Colonic mucosa (tissue), 4 donors: ENCODE measurements at regions of chr13 and their contacts with region 1.

Region 1: DNA sequence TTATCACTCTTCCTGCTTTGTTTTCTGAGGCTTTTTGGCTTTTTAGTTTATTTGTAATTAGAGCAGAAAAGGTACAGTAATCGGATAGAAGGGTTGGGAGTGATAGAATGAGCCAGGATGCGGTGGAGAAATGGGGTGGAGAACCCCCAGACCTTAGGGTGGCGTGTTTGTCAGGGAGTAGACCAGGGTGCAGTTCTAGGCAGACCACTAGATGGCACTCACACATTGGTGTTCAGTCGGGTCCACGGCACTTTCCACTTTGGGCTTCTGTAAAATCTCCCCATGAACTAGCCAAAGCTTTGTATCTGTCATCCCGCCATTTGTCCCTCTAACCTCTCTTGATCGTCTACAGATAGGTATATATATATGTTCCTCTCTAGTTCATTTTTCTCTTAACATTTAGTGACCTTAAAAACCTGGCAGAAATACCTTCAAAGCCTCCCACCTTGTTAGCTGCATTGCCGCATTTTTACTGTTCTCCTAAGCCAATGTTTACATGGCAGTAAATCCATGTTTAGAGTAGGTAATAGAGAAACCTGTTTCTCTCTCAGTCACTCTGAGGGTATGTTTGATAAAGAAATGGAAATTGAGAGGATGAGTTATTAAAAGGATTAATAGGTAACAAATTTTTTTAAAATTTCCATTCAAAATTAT is 154.9 kb downstream of the TM9SF2 start:
- DNase-seq: peak; percentile 89
- H3K4me3 ChIP-seq: no peak overlapping the region
- H3K27ac ChIP-seq: no peak overlapping the region
- H3K4me1 ChIP-seq: no peaks in the 10 kb centered on the region
- H3K27me3 ChIP-seq: no peaks in the 10 kb centered on the region
- CTCF ChIP-seq: peak; percentile 82

Region 2: GRCh38 chr13:99250982-99251825 is 405.0 kb before region 1 on chr13:
- intact Hi-C with region 1: no loop called
- DNase-seq: no peak
- H3K4me3 ChIP-seq: no peak overlapping the region
- H3K27ac ChIP-seq: no peak overlapping the region
- H3K4me1 ChIP-seq: no peaks in the 10 kb centered on the region
- H3K27me3 ChIP-seq: no peaks in the 10 kb centered on the region
- CTCF ChIP-seq: no peak

Region 3: DNA sequence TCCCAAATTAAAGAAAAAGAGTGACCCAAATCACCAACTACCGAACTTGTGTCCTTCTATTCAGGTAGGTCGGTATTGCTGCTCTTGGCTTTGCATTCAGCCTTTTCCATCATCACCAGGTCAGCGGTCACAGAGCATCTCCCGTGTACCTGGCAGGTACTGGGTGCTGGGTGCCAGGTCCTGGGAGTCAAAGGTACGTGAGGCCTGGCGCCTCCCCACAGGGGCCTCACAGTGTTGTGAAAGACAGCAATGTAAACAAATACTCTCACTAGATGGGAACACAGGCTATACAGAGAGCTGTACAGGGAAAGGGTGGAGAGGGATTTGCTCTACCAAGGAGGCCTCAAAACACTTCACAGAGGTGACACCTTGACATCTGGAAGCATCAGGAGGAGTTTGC is 228.7 kb after region 1 on chr13:
- intact Hi-C with region 1: no loop called
- DNase-seq: no peak
- H3K4me3 ChIP-seq: no peak overlapping the region
- H3K27ac ChIP-seq: no peak overlapping the region
- H3K4me1 ChIP-seq: no peaks in the 10 kb centered on the region
- H3K27me3 ChIP-seq: no peaks in the 10 kb centered on the region
- CTCF ChIP-seq: no peak

Region 4: GRCh38 chr13:99895223-99895994 is 239.2 kb after region 1 on chr13:
- intact Hi-C with region 1: loop called (anchors 5 kb)
- DNase-seq: peak; percentile 25
- H3K4me3 ChIP-seq: peak overlapping the region; percentile 44
- H3K27ac ChIP-seq: no peak overlapping the region
- H3K4me1 ChIP-seq: no peaks in the 10 kb centered on the region
- H3K27me3 ChIP-seq: peaks cover 26% of the 10 kb centered on the region
- CTCF ChIP-seq: no peak

Region 5: GRCh38 chr13:99916366-99917103 is 260.3 kb after region 1 on chr13:
- intact Hi-C with region 1: no loop called
- DNase-seq: peak; percentile 46
- H3K4me3 ChIP-seq: no peak overlapping the region
- H3K27ac ChIP-seq: no peak overlapping the region
- H3K4me1 ChIP-seq: no peaks in the 10 kb centered on the region
- H3K27me3 ChIP-seq: no peaks in the 10 kb centered on the region
- CTCF ChIP-seq: peak; percentile 87

Region 6: GRCh38 chr13:100514788-100515409 is 858.7 kb after region 1 on chr13:
- intact Hi-C with region 1: loop called (anchors 5 kb)
- DNase-seq: peak; percentile 84
- H3K4me3 ChIP-seq: no peak overlapping the region
- H3K27ac ChIP-seq: no peak overlapping the region
- H3K4me1 ChIP-seq: no peaks in the 10 kb centered on the region
- H3K27me3 ChIP-seq: no peaks in the 10 kb centered on the region
- CTCF ChIP-seq: peak; percentile 88